K562 (cell line): ENCODE measurements at regions of chr14 and their contacts with region 1.

Region 1: GRCh38 chr14:76968621-76969063 is 59.9 kb downstream of the IRF2BPL start:
- DNase-seq: no peak
- ATAC-seq: no peak
- H3K4me3 ChIP-seq: no peak overlapping the region
- H3K27ac ChIP-seq: no peak overlapping the region
- H3K4me1 ChIP-seq: peaks cover 0 to 12% of the 10 kb centered on the region in 2 experiments; a peak in 4 of 5 replicates
- H3K27me3 ChIP-seq: no peaks in the 10 kb centered on the region
- CTCF ChIP-seq: no peak
- EP300 ChIP-seq: no peak
- POLR2A ChIP-seq: no peak
- RAD21 ChIP-seq: no peak

Region 2: DNA sequence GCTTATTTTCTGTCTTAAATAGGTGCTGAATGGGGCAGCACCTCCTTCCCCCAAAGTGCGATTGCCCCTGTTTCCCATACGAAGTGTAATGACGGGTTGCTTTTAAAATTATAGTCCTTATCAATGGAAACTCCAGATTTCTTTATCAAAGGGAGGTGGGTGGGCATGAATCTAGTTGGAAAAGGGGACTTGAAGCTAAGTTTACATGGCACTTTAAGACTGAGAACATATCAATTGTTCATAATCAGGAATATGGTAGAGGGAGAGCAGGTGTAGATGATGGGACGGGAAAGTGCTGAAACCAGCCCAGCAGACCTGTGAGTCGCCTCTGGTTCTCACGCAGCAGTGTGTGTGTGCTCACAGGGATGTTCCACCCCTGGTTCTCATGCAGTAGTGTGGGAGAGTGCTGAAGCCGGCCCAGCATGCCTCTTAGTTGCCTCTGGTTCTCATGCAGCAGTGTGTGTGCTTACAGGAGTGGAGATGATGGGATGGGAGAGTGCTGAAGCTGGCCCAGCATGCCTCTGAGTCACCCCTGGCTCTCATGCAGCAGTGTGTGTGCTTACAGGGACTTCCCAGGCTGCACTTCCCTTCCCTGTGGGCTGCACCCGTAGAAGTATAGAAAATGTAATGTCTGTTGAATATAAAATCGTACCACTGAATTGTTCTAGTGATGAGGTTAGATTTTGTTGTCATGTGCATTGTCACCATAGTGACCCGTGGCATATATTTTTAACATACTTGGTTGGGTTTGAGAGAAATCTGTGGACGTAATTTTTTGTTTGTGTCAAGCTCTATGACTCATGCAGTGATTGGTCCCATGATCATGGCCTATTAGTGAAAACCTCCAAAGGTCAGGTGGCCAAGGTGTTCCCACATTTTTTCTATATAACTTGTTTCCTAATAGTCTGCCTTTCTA is 765.3 kb before region 1 on chr14:
- CTCF ChIA-PET with region 1: no interaction called
- POLR2A ChIA-PET with region 1: no interaction called
- in situ Hi-C with region 1: no loop called
- intact Hi-C with region 1: no loop called
- DNase-seq: no peak
- ATAC-seq: no peak
- H3K4me3 ChIP-seq: no peak overlapping the region
- H3K27ac ChIP-seq: no peak overlapping the region
- H3K4me1 ChIP-seq: peaks cover 0 to 7% of the 10 kb centered on the region in 2 experiments; a peak in 2 of 5 replicates
- H3K27me3 ChIP-seq: no peaks in the 10 kb centered on the region
- CTCF ChIP-seq: no peak
- EP300 ChIP-seq: no peak
- POLR2A ChIP-seq: no peak
- RAD21 ChIP-seq: no peak

Region 3: DNA sequence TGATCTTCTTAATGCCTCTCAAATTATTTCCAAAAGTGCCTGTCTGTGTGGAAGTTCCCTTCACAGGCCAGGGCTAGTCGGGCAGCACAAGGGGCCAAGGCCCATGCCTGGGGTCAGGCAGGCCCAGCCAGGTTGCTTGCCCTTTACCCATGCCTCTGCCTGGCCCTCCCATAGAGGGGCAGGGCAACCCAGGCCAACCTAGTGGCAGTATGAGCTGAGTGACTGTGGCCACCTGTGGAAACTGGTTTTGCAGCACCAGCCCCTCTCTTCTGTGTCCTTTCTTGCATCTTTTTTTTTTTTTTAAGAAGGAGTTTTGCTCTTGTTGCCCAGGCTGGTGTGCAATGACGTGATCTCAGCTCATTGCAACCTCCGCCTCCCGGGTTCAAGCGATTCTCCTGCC is 11.9 kb after region 1 on chr14:
- CTCF ChIA-PET with region 1: no interaction called
- POLR2A ChIA-PET with region 1: no interaction called
- in situ Hi-C with region 1: no loop called
- intact Hi-C with region 1: no loop called
- DNase-seq: no peak
- ATAC-seq: no peak
- H3K4me3 ChIP-seq: no peak overlapping the region
- H3K27ac ChIP-seq: no peak overlapping the region
- H3K4me1 ChIP-seq: peaks cover 10 to 12% of the 10 kb centered on the region in 2 experiments; a peak in 3 of 5 replicates
- H3K27me3 ChIP-seq: no peaks in the 10 kb centered on the region
- CTCF ChIP-seq: no peak
- EP300 ChIP-seq: no peak
- POLR2A ChIP-seq: no peak
- RAD21 ChIP-seq: no peak

Region 4: GRCh38 chr14:77014004-77014604 is 45.5 kb after region 1 on chr14:
- CTCF ChIA-PET with region 1: no interaction called
- POLR2A ChIA-PET with region 1: interaction called, 3 read pairs
- in situ Hi-C with region 1: loop called (anchors 5 kb)
- intact Hi-C with region 1: no loop called
- DNase-seq: no peak
- ATAC-seq: no peak
- H3K4me3 ChIP-seq: no peak overlapping the region
- H3K27ac ChIP-seq: no peak overlapping the region
- H3K4me1 ChIP-seq: no peaks in the 10 kb centered on the region; a peak in 2 of 5 replicates
- H3K27me3 ChIP-seq: no peaks in the 10 kb centered on the region
- CTCF ChIP-seq: no peak
- EP300 ChIP-seq: no peak
- POLR2A ChIP-seq: no peak
- RAD21 ChIP-seq: no peak